A549 (cell line): ENCODE measurements at regions of chr22 and their contacts with region 1.

Region 1: GRCh38 chr22:46542011-46542985 is 4.9 kb upstream of the CELSR1 start:
- DNase-seq: peak; percentile 72 to 83
- ATAC-seq: peak; percentile 87 to 93
- H3K4me3 ChIP-seq: no peak overlapping the region
- H3K27ac ChIP-seq: peak overlapping the region; percentile 47 to 78; a peak in 5 of 6 replicates
- H3K4me1 ChIP-seq: peaks cover 41% of the 10 kb centered on the region
- CTCF ChIP-seq: peak; percentile 81
- EP300 ChIP-seq: no peak
- POLR2A ChIP-seq: no peak
- RAD21 ChIP-seq: peak; percentile 94 to 95

Region 2: GRCh38 chr22:46122511-46122971 is 419.8 kb before region 1 on chr22:
- CTCF ChIA-PET with region 1: interaction called, 10 read pairs
- POLR2A ChIA-PET with region 1: no interaction called
- DNase-seq: peak in 1 of 2 experiments; percentile 76
- ATAC-seq: peak; percentile 47 to 74
- H3K4me3 ChIP-seq: no peak overlapping the region
- H3K27ac ChIP-seq: peak overlapping the region; percentile 59 to 85; a peak in 5 of 6 replicates
- H3K4me1 ChIP-seq: 0 out of 3 replicates have a peak, but pooled peaks cover 4% of the 10 kb centered on the region
- CTCF ChIP-seq: peak; percentile 76
- EP300 ChIP-seq: no peak
- POLR2A ChIP-seq: no peak
- RAD21 ChIP-seq: peak; percentile 77 to 84

Region 3: GRCh38 chr22:46267431-46268279 is 274.6 kb before region 1 on chr22 and contains the start of gene TTC38:
- CTCF ChIA-PET with region 1: no interaction called
- POLR2A ChIA-PET with region 1: no interaction called
- DNase-seq: peak; percentile 77 to 87
- ATAC-seq: peak; percentile 98
- H3K4me3 ChIP-seq: peak within 1 kb of the TSS; percentile 76
- H3K27ac ChIP-seq: peak within 1 kb of the TSS; percentile 82 to 95
- H3K4me1 ChIP-seq: peaks cover 18% of the 10 kb centered on the region; the same call in 1 of the 3 replicates
- CTCF ChIP-seq: no peak
- EP300 ChIP-seq: no peak
- POLR2A ChIP-seq: peak; percentile 53
- RAD21 ChIP-seq: no peak
- polyA plus RNA-seq, gene TTC38: 12.4 and 17.3 TPM in 2 replicates

Region 4: GRCh38 chr22:46377566-46378425 is 164.5 kb before region 1 on chr22:
- CTCF ChIA-PET with region 1: interaction called, 11 read pairs
- POLR2A ChIA-PET with region 1: no interaction called
- DNase-seq: peak; percentile 89 to 92
- ATAC-seq: peak; percentile 74 to 82
- H3K4me3 ChIP-seq: no peak overlapping the region
- H3K27ac ChIP-seq: peak overlapping the region; percentile 91 to 93
- H3K4me1 ChIP-seq: peaks cover 51% of the 10 kb centered on the region
- CTCF ChIP-seq: no peak
- EP300 ChIP-seq: peak; percentile 23 to 69; a peak in 2 of 5 replicates
- POLR2A ChIP-seq: no peak
- RAD21 ChIP-seq: no peak

Region 5: DNA sequence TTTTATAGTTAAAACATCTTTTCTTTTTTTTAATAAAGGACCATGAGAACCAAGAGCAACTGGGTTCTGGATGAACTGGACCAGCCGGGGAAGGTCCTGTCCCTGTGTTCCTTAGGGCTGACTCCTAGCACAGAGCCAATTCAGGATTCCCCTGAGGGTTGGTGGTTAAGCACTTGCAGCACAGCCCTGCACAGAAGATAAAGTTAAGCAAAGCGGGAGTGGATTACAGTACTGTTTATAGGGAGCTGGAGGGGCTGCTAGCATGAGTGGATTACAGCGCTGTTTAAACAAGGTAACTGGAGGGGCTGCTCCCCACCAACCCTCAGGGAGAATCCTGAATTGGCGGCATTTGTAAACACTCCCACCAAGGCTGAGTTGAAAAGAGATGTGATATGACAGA is 95.5 kb before region 1 on chr22:
- CTCF ChIA-PET with region 1: interaction called, 16 read pairs
- POLR2A ChIA-PET with region 1: no interaction called
- DNase-seq: no peak
- ATAC-seq: no peak
- H3K4me3 ChIP-seq: no peak overlapping the region
- H3K27ac ChIP-seq: peak overlapping the region; percentile 27 to 78; a peak in 5 of 6 replicates
- H3K4me1 ChIP-seq: peaks cover 27% of the 10 kb centered on the region
- CTCF ChIP-seq: no peak
- EP300 ChIP-seq: no peak
- POLR2A ChIP-seq: no peak
- RAD21 ChIP-seq: no peak

Region 6: DNA sequence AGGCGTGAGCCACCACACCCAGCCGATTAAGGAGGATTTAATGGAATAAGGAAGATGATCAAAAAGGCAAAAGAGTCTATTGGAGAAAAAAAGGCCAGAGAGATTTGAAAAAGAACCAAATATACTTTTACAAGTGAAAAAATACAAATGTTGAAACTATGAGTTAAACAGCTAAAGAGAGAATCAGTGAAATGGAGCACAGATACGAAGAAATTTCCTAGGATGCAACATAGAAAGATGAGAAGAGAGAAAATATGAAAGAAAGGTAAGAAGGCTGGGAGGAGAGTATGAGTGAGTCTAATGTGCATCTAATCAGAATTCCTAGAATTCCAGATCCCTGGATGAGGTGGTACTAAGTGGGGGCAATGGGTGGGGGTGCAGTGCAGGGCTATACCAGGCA is 14.5 kb after region 1 on chr22:
- CTCF ChIA-PET with region 1: interaction called, 39 read pairs
- POLR2A ChIA-PET with region 1: no interaction called
- DNase-seq: no peak
- ATAC-seq: no peak
- H3K4me3 ChIP-seq: no peak overlapping the region
- H3K27ac ChIP-seq: no peak overlapping the region
- H3K4me1 ChIP-seq: no peaks in the 10 kb centered on the region
- CTCF ChIP-seq: no peak
- EP300 ChIP-seq: no peak
- POLR2A ChIP-seq: no peak
- RAD21 ChIP-seq: no peak